ENCODE measurements at regions of chr11 and their contacts with region 1.

Region 1: GRCh38 chr11:91997226-91997625 is 227.4 kb upstream of the FAT3 start:
- DNase-seq: no peak

Region 2: DNA sequence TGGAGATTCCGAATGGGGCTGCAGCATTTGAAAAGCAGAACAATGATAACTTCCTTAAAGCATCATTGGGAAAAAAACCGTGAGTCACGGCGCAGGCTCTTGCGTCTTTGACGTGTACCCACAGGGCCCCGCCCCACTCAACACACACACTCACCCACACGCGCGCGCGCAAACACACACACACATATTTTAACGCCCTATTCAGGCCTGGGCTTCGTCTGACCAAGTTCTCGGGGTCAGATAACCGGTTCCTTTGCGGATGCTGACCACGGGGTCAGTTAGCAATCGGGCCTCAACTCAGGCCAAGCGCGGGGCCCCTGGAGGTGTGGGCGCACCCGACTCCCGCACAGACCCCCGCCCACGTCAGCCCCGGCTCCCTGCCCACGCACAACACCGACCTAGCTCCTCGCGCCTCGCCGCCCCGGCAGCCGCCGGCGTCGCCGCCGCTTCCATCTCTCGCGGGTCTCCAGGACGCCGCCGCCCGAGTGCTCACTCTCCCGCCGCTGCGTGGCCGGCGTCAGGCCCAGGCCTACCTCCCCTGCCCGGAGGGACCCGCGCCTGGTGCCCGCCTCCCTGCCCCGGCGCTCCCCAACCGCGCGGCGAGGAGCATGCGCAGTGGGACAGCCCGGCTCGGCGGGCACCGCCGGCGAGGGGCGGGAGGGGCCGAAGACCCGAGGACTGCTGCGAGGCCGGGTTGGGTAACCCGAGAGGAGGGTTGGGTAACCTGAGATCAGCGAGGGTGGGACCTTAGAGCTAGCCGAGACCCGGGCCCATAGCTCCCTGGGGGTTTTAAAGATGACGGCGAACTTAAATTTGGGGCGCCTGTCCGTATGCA is 1200.4 kb after region 1 on chr11 and contains the start of gene SLC36A4:
- intact Hi-C with region 1: loop called in 1 of 2 experiments (anchors 10 kb)
- DNase-seq: peak; percentile 98
- total RNA-seq, gene SLC36A4: 20.6 to 30.4 TPM

Measured in posterior vena cava (tissue), 2 donors.